Left cardiac atrium (tissue), 4 donors: ENCODE measurements at regions of chr2 and their contacts with region 1.

Region 1: GRCh38 chr2:144510294-144510991 is 9.5 kb downstream of the ZEB2 start:
- DNase-seq: no peak
- ATAC-seq: peak; percentile 41 to 67

Region 2: GRCh38 chr2:144332356-144333142 is 177.9 kb before region 1 on chr2:
- intact Hi-C with region 1: loop called in 1 of 2 experiments (anchors 5 kb)
- DNase-seq: peak; percentile 87
- ATAC-seq: peak; percentile 92 to 95

Region 3: GRCh38 chr2:144449028-144449406 is 61.4 kb before region 1 on chr2:
- intact Hi-C with region 1: loop called (anchors 5 to 10 kb)
- DNase-seq: no peak
- ATAC-seq: peak; percentile 35 to 71

Region 4: DNA sequence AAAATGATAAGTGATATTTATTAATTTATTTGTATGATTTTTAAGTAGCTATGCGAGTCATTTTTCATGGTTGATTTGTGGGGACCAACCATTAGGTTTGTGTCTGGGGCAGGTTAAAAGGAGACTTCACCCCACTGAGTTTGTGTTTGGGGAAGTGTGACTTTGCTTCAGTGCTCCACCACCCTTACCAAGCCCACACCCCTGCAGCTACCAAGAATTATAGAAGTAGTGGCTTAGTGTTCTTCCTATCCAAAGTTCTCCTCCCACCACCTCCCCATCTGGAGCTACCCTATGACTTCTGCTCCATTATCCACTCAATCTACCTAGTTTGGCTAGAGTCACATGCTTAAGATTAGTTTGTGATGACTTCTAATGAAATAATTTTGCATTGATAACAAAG is 191.6 kb after region 1 on chr2:
- intact Hi-C with region 1: no loop called
- DNase-seq: no peak
- ATAC-seq: peak in 1 of 2 donors; percentile 78